ENCODE measurements at regions of chr5 and their contacts with region 1.

Region 1: DNA sequence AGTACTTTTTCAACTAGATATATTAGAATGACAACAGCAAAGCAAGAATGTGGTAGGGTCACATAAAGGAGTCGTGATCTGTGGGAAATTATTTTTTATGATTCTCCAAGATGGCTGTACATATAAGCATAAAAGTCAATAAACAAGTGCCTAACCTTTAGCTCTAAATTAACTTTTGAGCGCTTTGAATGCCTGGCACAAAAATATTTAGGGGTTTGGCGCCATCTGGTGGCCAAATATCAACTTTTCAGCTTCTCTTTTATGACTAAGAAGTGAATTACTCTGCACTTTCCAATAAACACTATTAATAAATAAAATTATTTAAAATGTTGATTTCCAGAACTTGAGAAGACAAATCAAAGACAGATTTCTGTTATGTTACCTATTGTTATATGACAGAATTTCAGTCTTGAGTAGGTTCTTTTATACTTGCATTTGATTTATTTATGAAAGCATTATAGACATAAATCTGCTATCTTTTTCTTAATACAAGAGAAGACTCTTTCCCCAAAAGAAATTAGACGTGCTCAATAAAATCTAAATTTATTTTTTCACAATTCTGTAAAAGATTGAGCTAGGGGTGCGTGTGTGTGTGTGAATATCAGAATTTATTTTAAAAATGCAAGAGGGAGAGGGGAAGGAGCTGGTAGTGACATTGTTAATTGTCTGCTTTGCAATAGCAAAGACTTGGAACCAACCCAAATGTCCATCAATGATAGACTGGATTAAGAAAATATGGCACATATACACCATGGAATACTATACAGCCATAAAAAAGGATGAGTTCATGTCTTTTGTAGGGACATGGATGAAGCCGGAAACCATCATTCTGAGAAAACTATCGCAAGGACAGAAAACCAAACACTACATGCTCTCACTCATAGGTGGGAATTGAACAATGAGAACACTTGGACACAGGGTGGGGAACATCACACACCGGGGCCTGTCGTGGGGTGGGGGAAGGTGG is 36.7 kb upstream of the ARRDC3 start:
- DNase-seq: peak; percentile 36
- H3K27ac ChIP-seq: no peak overlapping the region
- CTCF ChIP-seq: peak; percentile 71

Region 2: DNA sequence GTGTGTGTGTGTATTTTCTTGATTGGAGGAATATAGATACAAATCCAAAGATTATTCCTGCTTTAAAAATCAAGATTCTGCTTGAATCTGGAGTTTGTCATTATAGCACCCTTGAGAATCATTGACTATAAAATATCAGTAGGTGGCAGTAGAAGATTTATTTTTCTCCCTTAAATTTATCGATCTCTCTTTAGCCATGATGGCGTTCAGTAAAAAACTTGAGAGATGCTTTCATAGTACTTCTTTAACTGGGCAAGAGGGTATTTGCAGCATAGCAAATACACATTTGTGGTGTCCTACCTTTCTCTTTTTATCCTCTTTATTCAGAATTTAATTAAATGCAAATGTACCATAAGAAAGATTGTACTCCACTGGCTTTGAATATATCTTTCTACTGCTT is 553.5 kb before region 1 on chr5:
- CTCF ChIA-PET with region 1: interaction called, 17 read pairs
- POLR2A ChIA-PET with region 1: no interaction called
- DNase-seq: peak; percentile 58
- H3K27ac ChIP-seq: no peak overlapping the region
- CTCF ChIP-seq: peak; percentile 69

Region 3: DNA sequence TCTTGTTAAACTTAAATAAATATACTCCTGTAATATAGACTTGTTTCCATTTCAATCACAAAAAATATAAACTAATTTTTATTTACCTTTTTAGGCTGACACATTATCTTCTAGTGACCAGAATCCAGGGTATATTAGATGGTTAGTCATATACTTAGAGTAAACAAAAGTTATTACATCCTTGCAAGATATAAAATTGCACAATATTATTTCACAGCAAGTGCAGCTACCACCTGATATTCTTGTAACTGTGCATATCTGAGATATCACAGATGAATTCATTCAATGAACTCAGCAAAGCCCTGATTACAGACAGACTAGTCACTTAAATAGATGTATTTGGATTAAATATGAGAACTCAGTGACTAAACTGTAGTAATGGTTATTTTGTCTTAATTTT is 11.1 kb before region 1 on chr5:
- CTCF ChIA-PET with region 1: interaction called, 20 read pairs
- POLR2A ChIA-PET with region 1: no interaction called
- DNase-seq: no peak
- H3K27ac ChIP-seq: no peak overlapping the region
- CTCF ChIP-seq: no peak

Region 4: DNA sequence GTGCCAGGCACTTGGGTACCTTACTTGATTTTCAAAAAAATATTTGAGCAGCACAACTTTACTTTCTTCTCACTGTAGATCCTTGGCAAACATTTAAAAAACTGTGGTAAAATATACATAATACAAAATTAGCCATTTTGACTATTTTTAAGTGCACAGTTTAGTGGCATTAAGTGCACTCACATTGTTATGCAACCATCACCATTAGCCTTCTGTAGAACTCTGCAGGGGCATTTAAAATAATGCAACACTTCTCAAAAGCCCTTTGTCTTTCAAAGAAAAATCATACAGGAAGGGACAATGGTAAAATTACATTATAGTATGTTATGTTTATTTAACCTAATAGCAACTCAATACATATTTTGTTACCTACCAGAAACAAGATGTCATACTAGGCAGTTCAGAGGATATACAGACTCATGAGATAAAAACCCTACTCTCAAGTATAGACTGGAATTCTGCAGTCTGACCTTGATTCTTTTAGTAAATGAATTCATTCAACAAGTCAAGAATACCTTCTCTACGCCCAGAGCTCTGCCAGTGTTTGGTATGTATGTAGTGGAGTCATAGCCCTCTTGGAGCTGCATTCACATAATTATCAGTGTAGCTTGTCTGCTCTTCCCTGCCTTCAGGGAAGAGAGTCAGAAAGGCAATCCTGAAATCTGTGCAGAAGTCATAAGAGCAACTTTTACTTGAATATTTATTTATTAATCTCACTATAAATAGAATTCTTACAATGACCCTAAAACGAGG is 37.2 kb after region 1 on chr5:
- CTCF ChIA-PET with region 1: no interaction called
- POLR2A ChIA-PET with region 1: no interaction called
- DNase-seq: no peak
- H3K27ac ChIP-seq: no peak overlapping the region
- CTCF ChIP-seq: no peak